Ovary (tissue), 10 donors: ENCODE measurements at regions of chr6 and their contacts with region 1.

Region 1: DNA sequence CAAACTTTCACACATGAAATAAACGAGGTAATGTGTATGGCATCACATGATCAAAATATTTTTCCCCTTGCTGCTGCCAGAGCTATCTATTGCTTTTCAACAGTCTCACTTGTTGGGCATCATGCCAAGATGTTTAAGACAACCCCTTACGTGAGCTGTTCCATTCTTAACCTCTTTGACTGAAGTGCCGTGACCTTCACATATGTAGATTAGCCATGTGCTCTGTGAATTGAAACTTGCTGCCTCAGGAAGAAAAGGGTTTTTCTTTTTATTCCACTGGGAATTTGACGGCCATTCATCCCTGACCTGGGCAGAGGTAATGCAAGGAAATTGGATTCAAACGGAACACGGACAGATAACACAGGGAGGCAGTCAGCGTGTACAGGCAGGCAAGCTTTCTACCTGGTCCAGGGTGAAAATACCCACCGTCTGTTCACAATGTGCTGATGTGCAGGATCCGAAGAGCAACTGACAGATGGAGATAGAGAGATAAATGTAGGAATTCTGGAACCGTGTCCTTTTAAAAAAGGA is 14.2 kb downstream of the ARID1B start:
- DNase-seq: no peak
- H3K4me3 ChIP-seq: no peak overlapping the region
- H3K27ac ChIP-seq: no peak overlapping the region
- H3K4me1 ChIP-seq: peaks cover 27% of the 10 kb centered on the region
- H3K27me3 ChIP-seq: no peaks in the 10 kb centered on the region
- CTCF ChIP-seq: no peak
- EP300 ChIP-seq: no peak
- POLR2A ChIP-seq: no peak

Region 2: DNA sequence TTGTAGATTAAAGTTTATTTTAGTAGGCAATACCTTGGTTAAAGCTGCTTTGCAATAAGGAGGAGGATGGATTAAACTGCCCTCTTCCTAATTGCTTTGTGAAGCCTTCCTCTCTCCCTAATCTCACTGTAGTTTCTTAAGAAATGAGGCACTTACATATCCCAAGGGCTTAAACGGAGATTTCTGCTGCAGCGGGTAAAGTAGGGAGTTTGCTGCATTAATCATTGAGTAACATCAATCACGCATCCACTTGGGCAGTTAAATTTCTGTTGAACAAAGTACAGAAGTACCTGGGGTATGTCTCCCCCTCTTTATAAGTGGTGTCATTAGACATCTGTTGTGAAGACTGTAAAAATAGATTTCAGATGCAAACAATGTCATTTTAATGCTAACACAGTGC is 43.7 kb before region 1 on chr6:
- intact Hi-C with region 1: no loop called
- DNase-seq: no peak
- H3K4me3 ChIP-seq: no peak overlapping the region
- H3K27ac ChIP-seq: no peak overlapping the region
- H3K4me1 ChIP-seq: peaks cover 6% of the 10 kb centered on the region
- H3K27me3 ChIP-seq: no peaks in the 10 kb centered on the region
- CTCF ChIP-seq: no peak
- EP300 ChIP-seq: no peak
- POLR2A ChIP-seq: no peak

Region 3: GRCh38 chr6:156832231-156832647 is 40.9 kb after region 1 on chr6:
- intact Hi-C with region 1: loop called in 1 of 4 experiments (anchors 5 kb)
- DNase-seq: peak; percentile 32 to 71 (median 52)
- H3K4me3 ChIP-seq: no peak overlapping the region
- H3K27ac ChIP-seq: no peak overlapping the region
- H3K4me1 ChIP-seq: peaks cover 12% of the 10 kb centered on the region
- H3K27me3 ChIP-seq: no peaks in the 10 kb centered on the region
- CTCF ChIP-seq: no peak
- EP300 ChIP-seq: no peak
- POLR2A ChIP-seq: no peak

Region 4: DNA sequence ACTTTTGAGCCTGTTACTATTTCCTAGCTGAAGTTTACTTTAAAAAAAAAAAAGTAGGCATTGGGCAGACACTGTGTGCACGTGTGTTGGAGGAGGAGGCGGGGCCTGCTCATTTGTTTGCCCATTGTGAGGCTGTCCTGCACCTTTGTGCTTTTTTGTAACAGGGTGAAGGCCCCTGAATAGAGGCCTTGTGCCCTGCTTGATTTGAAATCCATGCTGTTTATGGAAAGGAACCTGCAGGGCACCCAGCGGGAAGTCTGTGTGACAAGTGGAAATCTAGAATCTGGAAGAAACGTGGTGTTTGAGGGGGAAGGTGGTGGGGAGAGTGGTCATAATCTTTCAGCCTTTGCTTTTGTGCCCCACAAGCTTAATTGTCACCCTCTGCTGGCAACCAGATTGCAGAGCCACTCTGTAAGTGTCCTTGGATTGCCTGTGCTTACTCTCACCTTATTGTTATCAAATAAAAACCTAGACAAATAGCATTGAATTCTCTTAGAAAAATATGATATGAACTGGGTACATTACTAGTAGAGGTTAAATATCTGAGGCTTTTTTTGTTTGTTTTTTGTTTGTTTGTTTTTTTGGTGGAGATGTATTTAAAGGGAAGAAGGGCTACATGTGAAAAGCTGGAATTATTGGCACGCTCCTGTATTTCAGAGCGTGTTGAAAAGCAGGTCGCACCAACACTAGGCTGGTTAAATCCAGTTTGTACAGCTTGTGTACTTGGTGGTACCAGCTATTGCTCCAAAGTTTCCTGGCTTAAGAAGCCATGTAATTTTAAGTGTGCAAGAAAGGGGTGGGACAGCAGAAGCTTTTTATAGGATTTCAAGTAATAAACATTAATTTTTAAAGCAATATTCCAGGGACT is 142.1 kb after region 1 on chr6:
- intact Hi-C with region 1: loop called in 1 of 4 experiments (anchors 10 kb)
- DNase-seq: no peak
- H3K4me3 ChIP-seq: no peak overlapping the region
- H3K27ac ChIP-seq: peak overlapping the region in 1 of 2 donors; percentile 3
- H3K4me1 ChIP-seq: peaks cover 7% of the 10 kb centered on the region
- H3K27me3 ChIP-seq: no peaks in the 10 kb centered on the region
- CTCF ChIP-seq: no peak
- EP300 ChIP-seq: no peak
- POLR2A ChIP-seq: no peak